PC-9 (cell line): ENCODE measurements at regions of chr4 and their contacts with region 1.

Region 1: DNA sequence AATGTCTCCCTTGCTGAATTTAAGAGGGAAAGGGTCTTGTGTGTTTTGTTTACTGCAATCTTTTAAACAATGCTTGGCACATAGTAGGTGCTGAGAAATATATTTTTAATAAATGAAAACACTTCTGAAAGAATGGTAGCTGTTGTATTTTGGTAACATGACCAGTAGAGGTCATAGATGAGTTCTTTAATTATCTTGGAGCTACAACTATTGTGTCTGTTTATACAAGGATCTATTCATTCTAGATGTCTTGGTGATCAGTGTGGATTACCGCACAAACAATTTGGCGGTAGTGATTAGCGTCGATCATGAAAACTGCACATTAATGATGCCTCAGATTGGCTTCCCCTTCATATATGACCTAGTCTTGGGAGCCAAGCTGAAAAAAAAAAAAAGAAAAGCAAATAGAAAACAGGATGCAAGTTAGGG is 21.4 kb upstream of the SCRG1 start:
- DNase-seq: no peak
- H3K4me3 ChIP-seq: no peak overlapping the region
- H3K27ac ChIP-seq: no peak overlapping the region
- H3K4me1 ChIP-seq: peaks cover 27% of the 10 kb centered on the region
- H3K27me3 ChIP-seq: no peaks in the 10 kb centered on the region
- CTCF ChIP-seq: peak; percentile 62

Region 2: GRCh38 chr4:173013232-173013930 is 407.0 kb before region 1 on chr4:
- CTCF ChIA-PET with region 1: interaction called, 5 read pairs
- POLR2A ChIA-PET with region 1: no interaction called
- intact Hi-C with region 1: loop called (anchors 1 kb)
- DNase-seq: peak in 1 of 2 experiments; percentile 41
- H3K4me3 ChIP-seq: no peak overlapping the region
- H3K27ac ChIP-seq: no peak overlapping the region
- H3K4me1 ChIP-seq: peaks cover 11% of the 10 kb centered on the region
- H3K27me3 ChIP-seq: no peaks in the 10 kb centered on the region
- CTCF ChIP-seq: peak; percentile 79

Region 3: GRCh38 chr4:173318648-173319211 is 101.6 kb before region 1 on chr4:
- CTCF ChIA-PET with region 1: interaction called, 9 read pairs
- POLR2A ChIA-PET with region 1: no interaction called
- intact Hi-C with region 1: loop called (anchors 1 kb)
- DNase-seq: no peak
- H3K4me3 ChIP-seq: no peak overlapping the region
- H3K27ac ChIP-seq: no peak overlapping the region
- H3K4me1 ChIP-seq: no peaks in the 10 kb centered on the region
- H3K27me3 ChIP-seq: no peaks in the 10 kb centered on the region
- CTCF ChIP-seq: peak; percentile 66

Region 4: GRCh38 chr4:173494013-173494970 is 74.0 kb after region 1 on chr4:
- CTCF ChIA-PET with region 1: interaction called, 4 read pairs
- POLR2A ChIA-PET with region 1: no interaction called
- intact Hi-C with region 1: loop called (anchors 5 kb)
- DNase-seq: peak in 1 of 2 experiments; percentile 19
- H3K4me3 ChIP-seq: peak overlapping the region; percentile 29; the same call in 1 of the 2 replicates
- H3K27ac ChIP-seq: no peak overlapping the region
- H3K4me1 ChIP-seq: no peaks in the 10 kb centered on the region
- H3K27me3 ChIP-seq: no peaks in the 10 kb centered on the region
- CTCF ChIP-seq: peak; percentile 63

Region 5: GRCh38 chr4:173522123-173522950 is 102.0 kb after region 1 on chr4:
- CTCF ChIA-PET with region 1: no interaction called
- POLR2A ChIA-PET with region 1: no interaction called
- intact Hi-C with region 1: no loop called
- DNase-seq: no peak
- H3K4me3 ChIP-seq: no peak overlapping the region
- H3K27ac ChIP-seq: no peak overlapping the region
- H3K4me1 ChIP-seq: no peaks in the 10 kb centered on the region
- H3K27me3 ChIP-seq: no peaks in the 10 kb centered on the region
- CTCF ChIP-seq: no peak

Region 6: GRCh38 chr4:173937631-173938270 is 517.4 kb after region 1 on chr4:
- CTCF ChIA-PET with region 1: no interaction called
- POLR2A ChIA-PET with region 1: no interaction called
- intact Hi-C with region 1: no loop called
- DNase-seq: no peak
- H3K4me3 ChIP-seq: no peak overlapping the region
- H3K27ac ChIP-seq: no peak overlapping the region
- H3K4me1 ChIP-seq: no peaks in the 10 kb centered on the region
- H3K27me3 ChIP-seq: no peaks in the 10 kb centered on the region
- CTCF ChIP-seq: no peak

Region 7: DNA sequence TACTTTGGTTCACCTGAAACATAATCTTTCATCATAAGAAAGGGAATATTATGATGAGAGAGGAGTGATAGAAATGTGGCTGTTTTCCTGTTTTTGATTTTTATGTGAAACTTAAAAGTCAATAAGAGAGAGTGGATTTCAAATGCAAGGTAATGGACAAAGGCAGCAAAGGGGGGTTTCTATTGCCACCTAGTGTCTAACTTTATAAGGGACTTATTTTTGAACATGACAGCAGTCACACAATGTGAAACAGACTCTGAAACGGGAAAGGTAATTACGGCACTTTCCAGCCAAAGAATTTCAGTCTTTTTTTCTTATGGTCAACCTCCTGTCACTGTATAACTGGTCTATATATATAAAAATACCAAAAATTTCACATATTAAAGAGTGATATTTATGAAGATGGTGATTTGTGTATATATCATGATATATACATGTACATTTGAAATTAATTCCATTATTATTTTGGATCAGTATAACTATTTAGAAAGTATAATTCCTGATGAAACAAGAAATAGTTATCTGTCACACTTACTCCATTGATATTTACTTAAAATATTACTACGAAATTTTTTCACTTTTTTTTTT is 736.0 kb after region 1 on chr4:
- CTCF ChIA-PET with region 1: no interaction called
- POLR2A ChIA-PET with region 1: no interaction called
- intact Hi-C with region 1: loop called (anchors 10 kb)
- DNase-seq: no peak
- H3K4me3 ChIP-seq: no peak overlapping the region
- H3K27ac ChIP-seq: no peak overlapping the region
- H3K4me1 ChIP-seq: no peaks in the 10 kb centered on the region
- H3K27me3 ChIP-seq: no peaks in the 10 kb centered on the region
- CTCF ChIP-seq: peak; percentile 66